ENCODE measurements at regions of chr16 and their contacts with region 1.

Region 1: DNA sequence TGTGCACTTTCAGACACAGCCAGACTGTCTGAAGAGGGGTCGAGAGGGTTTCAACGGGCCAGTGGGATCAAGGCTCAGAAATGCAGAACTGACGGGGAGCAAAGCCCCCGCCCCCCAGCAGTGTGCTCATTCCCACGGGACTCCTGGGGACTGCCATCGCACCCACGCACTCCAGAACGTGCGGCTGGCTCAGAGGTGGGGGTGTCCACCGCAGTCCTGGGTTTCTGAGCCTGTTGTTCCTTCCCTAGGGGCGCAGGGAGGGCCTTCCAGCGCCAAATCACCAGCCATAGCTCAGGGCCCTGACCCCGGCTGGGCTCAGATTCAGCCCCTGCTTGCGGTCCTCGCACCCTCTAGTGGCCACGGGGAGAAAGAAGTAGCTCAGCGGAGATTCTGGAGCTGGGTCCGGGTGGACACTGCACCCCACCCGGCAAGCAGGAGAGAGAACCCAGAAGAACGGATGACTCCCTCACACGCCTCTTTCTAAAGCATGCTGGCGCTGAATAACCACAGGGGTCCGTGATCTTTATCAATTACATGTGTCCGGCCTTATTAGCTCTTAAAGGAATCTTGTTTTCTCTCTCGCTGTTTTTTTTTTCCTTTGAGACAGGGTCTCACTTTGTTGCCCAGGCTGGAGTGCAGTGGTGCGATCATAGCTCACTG is 45.0 kb upstream of the USP7 start:
- DNase-seq: peak; percentile 94
- H3K4me3 ChIP-seq: peak overlapping the region in 1 of 2 experiments; percentile 52; a peak in 1 of 4 replicates
- H3K27ac ChIP-seq: no peak overlapping the region
- H3K4me1 ChIP-seq: peaks cover 0 to 3% of the 10 kb centered on the region in 2 experiments; a peak in 1 of 4 replicates
- H3K27me3 ChIP-seq: no peaks in the 10 kb centered on the region
- CTCF ChIP-seq: peak; percentile 81
- EP300 ChIP-seq: no peak
- RAD21 ChIP-seq: peak; percentile 89

Region 2: DNA sequence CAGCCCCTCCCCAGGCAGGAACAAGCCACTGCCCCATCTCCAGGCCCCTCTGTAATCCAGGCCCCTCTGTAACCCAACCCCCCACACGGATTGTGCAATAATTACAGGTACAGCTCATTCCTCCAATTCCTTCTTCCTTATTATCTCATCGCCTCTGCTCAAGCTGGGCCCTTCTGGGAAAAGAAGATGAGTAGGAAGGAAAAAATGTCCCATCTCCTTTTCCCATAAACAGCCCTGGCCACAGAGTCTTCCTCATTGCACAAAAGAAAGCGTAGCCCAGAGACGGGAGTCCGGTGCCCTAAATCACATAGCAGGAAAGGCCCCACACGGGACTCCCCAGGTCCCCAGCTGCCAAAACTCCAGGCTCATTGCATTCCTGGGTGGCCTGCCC is 130.2 kb before region 1 on chr16:
- CTCF ChIA-PET with region 1: interaction called, 22 read pairs
- POLR2A ChIA-PET with region 1: no interaction called
- DNase-seq: no peak
- H3K4me3 ChIP-seq: no peak overlapping the region
- H3K27ac ChIP-seq: peak overlapping the region in 1 of 2 experiments; percentile 35; a peak in 1 of 4 replicates
- H3K4me1 ChIP-seq: peaks cover 0 to 3% of the 10 kb centered on the region in 2 experiments; a peak in 1 of 4 replicates
- H3K27me3 ChIP-seq: no peaks in the 10 kb centered on the region
- CTCF ChIP-seq: no peak
- EP300 ChIP-seq: peak in 1 of 2 experiments; percentile 14; a peak in 1 of 4 replicates
- RAD21 ChIP-seq: no peak

Region 3: DNA sequence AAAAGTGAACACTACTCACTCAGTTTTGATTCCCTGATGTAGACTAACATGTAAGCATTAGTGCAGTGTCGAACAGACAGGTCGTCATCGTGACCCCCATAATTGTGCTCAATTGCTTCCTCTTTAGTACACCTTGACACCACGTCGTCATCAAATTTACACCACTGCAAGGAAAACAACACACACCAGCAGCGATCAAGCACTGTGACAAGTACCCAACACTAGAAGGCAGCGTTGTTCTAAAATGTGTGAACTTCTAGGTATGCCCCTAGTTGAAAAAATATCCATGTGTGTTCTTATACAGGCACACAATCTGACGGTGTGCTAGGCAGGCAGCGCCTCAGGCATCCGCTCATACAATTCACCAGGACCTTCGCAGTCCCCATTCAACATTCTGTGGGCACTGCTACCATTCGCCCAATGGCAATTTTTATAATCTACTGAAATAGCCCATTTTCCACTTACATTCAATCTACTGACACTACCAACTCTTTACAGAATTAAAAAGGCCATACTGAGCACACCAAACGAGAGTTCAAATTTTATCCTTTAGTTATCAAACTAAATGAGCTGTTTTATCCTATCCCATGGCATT is 103.5 kb before region 1 on chr16:
- CTCF ChIA-PET with region 1: interaction called, 26 read pairs
- POLR2A ChIA-PET with region 1: no interaction called
- DNase-seq: peak; percentile 47
- H3K4me3 ChIP-seq: no peak overlapping the region
- H3K27ac ChIP-seq: no peak overlapping the region
- H3K4me1 ChIP-seq: no peaks in the 10 kb centered on the region; a peak in 1 of 4 replicates
- H3K27me3 ChIP-seq: no peaks in the 10 kb centered on the region
- CTCF ChIP-seq: peak; percentile 50
- EP300 ChIP-seq: no peak
- RAD21 ChIP-seq: peak; percentile 68

Region 4: GRCh38 chr16:8936421-8936820 is 72.3 kb before region 1 on chr16:
- CTCF ChIA-PET with region 1: interaction called, 72 read pairs
- POLR2A ChIA-PET with region 1: no interaction called
- DNase-seq: peak; percentile 68
- H3K4me3 ChIP-seq: no peak overlapping the region; a peak in 1 of 4 replicates
- H3K27ac ChIP-seq: no peak overlapping the region
- H3K4me1 ChIP-seq: peaks cover 0 to 7% of the 10 kb centered on the region in 2 experiments; a peak in 1 of 4 replicates
- H3K27me3 ChIP-seq: no peaks in the 10 kb centered on the region
- CTCF ChIP-seq: peak; percentile 54
- EP300 ChIP-seq: no peak
- RAD21 ChIP-seq: peak; percentile 54

Region 5: GRCh38 chr16:8962393-8963009 is 46.2 kb before region 1 on chr16:
- CTCF ChIA-PET with region 1: interaction called, 16 read pairs
- POLR2A ChIA-PET with region 1: interaction called, 3 read pairs
- DNase-seq: peak; percentile 53
- H3K4me3 ChIP-seq: peak overlapping the region; percentile 69 to 88
- H3K27ac ChIP-seq: peak overlapping the region in 1 of 2 experiments; percentile 77; a peak in 1 of 4 replicates
- H3K4me1 ChIP-seq: peaks cover 41 to 45% of the 10 kb centered on the region in 2 experiments
- H3K27me3 ChIP-seq: no peaks in the 10 kb centered on the region
- CTCF ChIP-seq: no peak
- EP300 ChIP-seq: no peak
- RAD21 ChIP-seq: no peak

Region 6: GRCh38 chr16:8989099-8989878 is 19.4 kb before region 1 on chr16:
- CTCF ChIA-PET with region 1: interaction called, 22 read pairs
- POLR2A ChIA-PET with region 1: no interaction called
- DNase-seq: no peak
- H3K4me3 ChIP-seq: no peak overlapping the region
- H3K27ac ChIP-seq: no peak overlapping the region
- H3K4me1 ChIP-seq: no peaks in the 10 kb centered on the region
- H3K27me3 ChIP-seq: no peaks in the 10 kb centered on the region
- CTCF ChIP-seq: no peak
- EP300 ChIP-seq: no peak
- RAD21 ChIP-seq: no peak

Region 7: GRCh38 chr16:9134739-9135138 is 126.0 kb after region 1 on chr16:
- CTCF ChIA-PET with region 1: interaction called, 27 read pairs
- POLR2A ChIA-PET with region 1: no interaction called
- DNase-seq: peak; percentile 82
- H3K4me3 ChIP-seq: no peak overlapping the region
- H3K27ac ChIP-seq: no peak overlapping the region
- H3K4me1 ChIP-seq: peaks cover 0 to 10% of the 10 kb centered on the region in 2 experiments; a peak in 2 of 4 replicates
- H3K27me3 ChIP-seq: no peaks in the 10 kb centered on the region
- CTCF ChIP-seq: peak; percentile 72
- EP300 ChIP-seq: no peak
- RAD21 ChIP-seq: peak; percentile 87

Measured in SK-N-SH (cell line).